AG04450 (cell line): ENCODE measurements at regions of chr12 and their contacts with region 1.

Region 1: DNA sequence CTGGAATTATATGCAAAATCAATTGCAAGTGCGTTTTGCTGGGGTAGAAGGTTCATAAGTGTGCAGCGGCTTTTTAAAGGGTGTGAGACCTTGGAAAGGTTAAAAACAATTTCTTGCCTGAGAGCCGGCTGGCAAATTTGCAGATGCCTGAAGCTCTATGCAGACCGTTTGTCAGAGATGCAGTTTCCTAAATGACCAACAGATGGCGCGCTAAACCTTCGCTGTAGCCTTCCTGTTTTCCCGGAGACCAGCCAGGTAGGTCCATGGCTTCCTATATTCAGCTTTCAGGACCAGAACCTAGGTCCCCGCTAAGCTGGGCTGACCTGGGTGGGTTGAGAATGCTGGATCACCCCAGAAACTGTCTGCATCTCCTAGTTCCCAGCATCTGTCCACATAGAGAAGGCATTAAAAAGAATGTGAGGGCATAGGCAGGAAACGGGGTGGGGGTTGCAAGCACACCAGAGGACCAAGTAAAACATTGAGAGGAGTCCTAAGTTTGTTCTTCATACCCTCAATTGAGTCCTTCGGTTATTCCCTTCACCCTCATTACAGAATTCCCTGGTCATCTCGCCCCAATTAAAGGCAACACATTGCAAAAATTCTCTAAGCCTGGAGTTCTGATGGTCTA is 5.7 kb upstream of the NOS1 start:
- DNase-seq: peak; percentile 29
- H3K4me3 ChIP-seq: no peak overlapping the region
- H3K27ac ChIP-seq: no peak overlapping the region
- H3K27me3 ChIP-seq: no peaks in the 10 kb centered on the region
- CTCF ChIP-seq: peak; percentile 80

Region 2: GRCh38 chr12:117850048-117850447 is 482.9 kb after region 1 on chr12:
- CTCF ChIA-PET with region 1: interaction called, 33 read pairs
- POLR2A ChIA-PET with region 1: no interaction called
- DNase-seq: no peak
- H3K4me3 ChIP-seq: no peak overlapping the region
- H3K27ac ChIP-seq: no peak overlapping the region
- H3K27me3 ChIP-seq: no peaks in the 10 kb centered on the region
- CTCF ChIP-seq: peak; percentile 88